Adrenal gland (tissue), 19 donors: ENCODE measurements at regions of chr2 and their contacts with region 1.

Region 1: DNA sequence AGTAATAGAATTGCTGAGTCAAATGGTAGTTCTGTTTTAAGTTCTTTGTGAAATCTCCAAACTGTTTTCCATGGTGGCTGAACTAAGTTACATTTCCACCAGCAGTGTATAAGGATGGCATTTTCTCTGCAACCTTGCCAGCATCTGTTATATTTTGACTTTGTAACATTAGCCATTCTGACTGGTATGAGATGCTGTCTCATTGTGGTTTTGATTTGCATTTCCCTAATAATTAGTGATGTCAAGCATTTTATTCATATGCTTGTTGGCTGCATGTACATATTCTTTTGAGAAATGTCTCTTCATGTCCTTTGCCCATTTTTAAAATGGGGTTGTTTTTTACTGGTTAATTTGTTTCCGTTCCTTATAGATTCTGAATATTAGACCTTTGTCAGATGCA is 63.9 kb downstream of the LANCL1 start:
- DNase-seq: no peak
- H3K4me3 ChIP-seq: no peak overlapping the region
- H3K27ac ChIP-seq: no peak overlapping the region
- H3K4me1 ChIP-seq: no peaks in the 10 kb centered on the region
- H3K27me3 ChIP-seq: no peaks in the 10 kb centered on the region
- CTCF ChIP-seq: no peak
- POLR2A ChIP-seq: no peak

Region 2: GRCh38 chr2:210252699-210253606 is 159.7 kb before region 1 on chr2:
- intact Hi-C with region 1: loop called in 1 of 2 experiments (anchors 5 kb)
- DNase-seq: no peak
- H3K4me3 ChIP-seq: no peak overlapping the region
- H3K27ac ChIP-seq: no peak overlapping the region
- H3K4me1 ChIP-seq: no peaks in the 10 kb centered on the region
- H3K27me3 ChIP-seq: no peaks in the 10 kb centered on the region
- CTCF ChIP-seq: no peak
- POLR2A ChIP-seq: no peak